Activated CD8-positive, alpha-beta T cell treated with anti-CD3 and anti-CD28 coated beads, Interleukin-2, amount 10 ng/mL, durations not matched to agents 7 days and 5 days (primary cell): ENCODE measurements at regions of chr10 and their contacts with region 1.

Region 1: GRCh38 chr10:73246783-73247508 is at the start of gene DNAJC9:
- DNase-seq: peak; percentile 98
- ATAC-seq: peak; percentile 95
- H3K4me3 Mint-ChIP-seq: peak within 1 kb of the TSS; percentile 100
- H3K27ac Mint-ChIP-seq: peak within 1 kb of the TSS; percentile 98
- H3K4me1 Mint-ChIP-seq: peaks cover 64% of the 10 kb centered on the region
- H3K27me3 Mint-ChIP-seq: no peaks in the 10 kb centered on the region
- total RNA-seq, gene DNAJC9: 70.7 to 71.6 TPM

Region 2: GRCh38 chr10:73233883-73234282 is 13.1 kb before region 1 on chr10:
- CTCF ChIA-PET with region 1: interaction called, 9 read pairs
- POLR2A ChIA-PET with region 1: interaction called, 12 read pairs
- DNase-seq: no peak
- ATAC-seq: no peak
- H3K4me3 Mint-ChIP-seq: no peak overlapping the region
- H3K27ac Mint-ChIP-seq: no peak overlapping the region
- H3K4me1 Mint-ChIP-seq: no peaks in the 10 kb centered on the region
- H3K27me3 Mint-ChIP-seq: no peaks in the 10 kb centered on the region

Region 3: DNA sequence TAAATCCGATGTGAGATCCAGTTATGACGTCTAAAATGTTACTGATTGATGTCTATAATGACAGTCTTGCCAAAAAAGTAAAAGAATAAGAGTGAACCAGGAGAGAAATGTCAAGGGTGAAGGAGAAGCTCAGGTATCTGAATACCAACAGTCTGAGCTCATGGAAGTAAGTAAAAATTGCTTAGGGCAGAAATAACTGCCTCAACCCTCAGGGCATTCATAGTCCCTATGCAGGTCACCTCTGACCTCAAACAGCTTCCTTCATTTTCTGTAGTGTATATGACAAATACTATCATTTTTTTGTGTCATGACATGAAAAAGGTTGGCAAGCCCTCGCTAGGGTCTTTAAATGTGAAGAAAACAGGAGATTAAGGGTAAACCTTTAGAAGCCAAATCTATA is 46.5 kb after region 1 on chr10:
- CTCF ChIA-PET with region 1: no interaction called
- POLR2A ChIA-PET with region 1: no interaction called
- DNase-seq: no peak
- ATAC-seq: no peak
- H3K4me3 Mint-ChIP-seq: no peak overlapping the region
- H3K27ac Mint-ChIP-seq: no peak overlapping the region
- H3K4me1 Mint-ChIP-seq: no peaks in the 10 kb centered on the region
- H3K27me3 Mint-ChIP-seq: peaks cover 12% of the 10 kb centered on the region

Region 4: GRCh38 chr10:73358331-73359279 is 111.7 kb after region 1 on chr10 and contains the start of gene CFAP70:
- CTCF ChIA-PET with region 1: interaction called, 6 read pairs
- POLR2A ChIA-PET with region 1: interaction called, 16 read pairs
- DNase-seq: peak; percentile 96
- ATAC-seq: peak; percentile 96
- H3K4me3 Mint-ChIP-seq: peak within 1 kb of the TSS; percentile 99
- H3K27ac Mint-ChIP-seq: peak within 1 kb of the TSS; percentile 90
- H3K4me1 Mint-ChIP-seq: peaks cover 16% of the 10 kb centered on the region
- H3K27me3 Mint-ChIP-seq: peaks cover 10% of the 10 kb centered on the region
- total RNA-seq, gene CFAP70: 0.40 to 0.57 TPM